Heart left ventricle (tissue), 16 donors: ENCODE measurements at regions of chr1 and their contacts with region 1.

Region 1: DNA sequence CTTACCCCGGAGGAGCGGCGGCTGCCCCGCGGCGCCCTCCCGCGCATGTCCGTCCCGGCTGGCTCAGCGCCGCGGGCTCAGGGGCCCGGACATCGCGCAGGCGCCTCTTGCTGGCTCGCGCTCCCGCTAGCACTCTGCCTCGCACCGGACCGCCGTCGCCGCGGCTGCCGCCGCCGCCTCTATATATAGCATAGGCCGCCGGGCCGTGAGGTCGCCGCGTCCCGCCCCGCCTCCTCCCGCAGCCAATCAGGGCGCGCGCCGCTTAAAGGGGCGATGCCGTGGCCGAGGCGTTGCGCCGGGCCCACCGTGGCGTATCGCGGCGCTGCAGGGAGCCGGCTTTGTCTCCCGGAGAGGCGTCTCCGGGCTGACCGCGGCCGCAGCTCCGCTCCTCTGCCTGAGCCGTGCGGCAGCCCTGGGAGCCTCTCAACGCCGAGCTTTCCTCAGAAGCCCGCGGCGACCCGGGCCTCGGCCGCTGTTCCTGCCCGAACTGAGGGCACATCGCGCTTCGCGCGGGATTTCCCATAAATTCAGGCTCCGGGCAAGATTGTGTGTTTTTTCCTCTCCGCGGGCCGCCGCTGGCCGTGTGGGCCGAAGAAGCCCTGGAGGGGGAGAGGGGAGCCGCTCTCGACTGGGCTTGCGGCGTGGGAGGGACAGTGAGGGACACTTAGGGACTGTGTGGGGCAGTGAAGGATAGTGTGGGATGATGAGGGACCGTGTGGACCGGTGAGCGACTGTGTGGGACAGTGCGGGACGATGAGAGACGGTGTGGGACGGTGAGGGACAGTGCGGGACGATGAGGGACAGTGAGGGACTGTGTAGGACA is at the start of gene ERRFI1:
- DNase-seq: peak; percentile 94 to 98 (median 96)
- ATAC-seq: peak; percentile 94 to 98 (median 96)
- H3K4me3 ChIP-seq: peak within 1 kb of the TSS; percentile 66 to 95 (median 86)
- H3K27ac ChIP-seq: peak within 1 kb of the TSS; percentile 61 to 96 (median 88)
- H3K4me1 ChIP-seq: peaks cover 0 to 49% (median 29%) of the 10 kb centered on the region in 12 donors
- H3K27me3 ChIP-seq: peaks cover 0 to 17% (median 0%) of the 10 kb centered on the region in 9 donors
- CTCF ChIP-seq: peak in 3 of 12 donors; percentile 8 to 21 (median 11)
- POLR2A ChIP-seq: peak; percentile 94 to 99
- total RNA-seq, gene ERRFI1: 6.2 to 16.1 (median 12.0) TPM

Region 2: DNA sequence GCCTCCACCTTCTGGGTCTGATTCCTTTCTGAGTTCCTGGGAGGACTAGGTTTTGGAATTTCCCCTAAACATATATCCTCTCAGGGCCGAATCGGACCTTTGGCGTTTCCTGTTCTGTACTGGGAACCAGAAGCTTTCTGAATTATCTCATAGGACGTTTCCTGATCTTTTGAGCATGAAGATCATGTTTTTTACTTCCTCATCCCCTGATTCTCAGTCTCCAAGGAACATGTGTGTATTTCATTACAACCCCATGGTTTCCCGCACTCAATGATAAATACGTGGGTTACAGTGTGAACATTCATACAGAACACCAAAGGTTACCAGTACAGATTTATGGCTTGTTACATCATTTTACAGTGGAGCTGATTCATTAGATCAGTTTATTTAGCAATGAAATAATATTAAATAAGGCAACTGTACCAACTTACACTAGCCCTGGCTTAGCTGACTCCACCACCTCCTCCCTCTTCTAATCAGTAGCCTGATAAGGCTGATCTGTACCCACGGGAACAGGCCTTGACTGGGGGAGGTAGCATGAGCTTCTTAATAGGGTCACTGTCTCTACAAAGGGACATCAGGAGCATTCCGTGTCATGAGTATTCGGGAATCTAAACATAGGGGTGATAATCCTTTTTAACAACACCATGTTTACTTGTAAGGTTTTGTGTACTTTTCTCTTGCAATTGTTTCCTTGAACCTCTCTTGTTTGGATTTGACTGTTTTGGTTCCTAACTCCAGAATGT is 57.5 kb after region 1 on chr1:
- intact Hi-C with region 1: loop called in 1 of 10 experiments (anchors 10 kb)
- DNase-seq: no peak
- ATAC-seq: peak; percentile 33 to 79 (median 45)
- H3K4me3 ChIP-seq: no peak overlapping the region
- H3K27ac ChIP-seq: peak overlapping the region in 10 of 12 donors; percentile 26 to 77 (median 70)
- H3K4me1 ChIP-seq: peaks cover 0 to 36% (median 18%) of the 10 kb centered on the region in 12 donors
- H3K27me3 ChIP-seq: no peaks in the 10 kb centered on the region
- CTCF ChIP-seq: no peak
- POLR2A ChIP-seq: no peak

Region 3: GRCh38 chr1:8202182-8202905 is 176.0 kb after region 1 on chr1:
- intact Hi-C with region 1: loop called in 1 of 10 experiments (anchors 10 kb)
- DNase-seq: peak; percentile 37 to 70 (median 56)
- ATAC-seq: peak; percentile 80 to 90 (median 84)
- H3K4me3 ChIP-seq: peak overlapping the region in 7 of 12 donors; percentile 4 to 45 (median 35)
- H3K27ac ChIP-seq: peak overlapping the region in 11 of 12 donors; percentile 13 to 89 (median 69)
- H3K4me1 ChIP-seq: peaks cover 0 to 39% (median 7%) of the 10 kb centered on the region in 12 donors
- H3K27me3 ChIP-seq: no peaks in the 10 kb centered on the region
- CTCF ChIP-seq: no peak
- POLR2A ChIP-seq: no peak

Region 4: DNA sequence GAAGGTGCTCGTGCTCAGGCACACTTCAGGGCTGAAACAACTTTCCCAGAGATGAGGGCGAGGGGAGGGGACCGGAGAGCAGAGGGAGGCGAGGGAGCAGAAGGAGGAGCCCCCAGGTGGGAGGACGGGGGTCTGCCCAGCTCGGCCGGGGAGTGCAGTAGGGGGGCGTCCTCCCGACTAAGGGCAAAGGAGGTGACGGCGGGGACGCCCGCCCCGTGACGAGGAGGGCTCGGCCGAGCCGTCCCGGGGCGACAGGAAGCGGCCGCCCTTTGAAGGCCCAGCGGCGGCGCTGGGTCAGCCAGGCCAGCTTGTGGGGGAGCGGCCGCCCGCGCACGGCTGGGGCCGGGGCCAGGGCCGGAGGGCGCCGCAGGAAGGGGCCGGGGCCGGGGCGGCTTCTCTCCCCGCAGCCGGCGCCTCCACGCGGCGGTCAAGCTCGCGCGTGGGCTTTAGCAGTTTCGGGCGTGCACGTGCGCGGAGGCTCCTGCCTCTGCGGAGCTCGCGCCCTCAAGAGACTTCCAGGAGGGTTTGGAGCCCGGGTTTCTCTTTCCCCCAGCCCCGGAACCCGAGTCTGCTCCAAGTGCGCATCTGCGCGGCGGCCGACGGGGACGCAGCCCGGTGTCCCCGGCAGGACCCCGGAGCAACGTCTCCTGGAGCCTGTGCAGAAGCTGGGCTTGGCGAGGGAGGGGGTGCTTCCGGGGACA is 190.8 kb after region 1 on chr1:
- intact Hi-C with region 1: loop called in 5 of 10 experiments (anchors 5 to 10 kb)
- DNase-seq: peak; percentile 47 to 78 (median 53)
- ATAC-seq: peak; percentile 33 to 87 (median 84)
- H3K4me3 ChIP-seq: peak overlapping the region; percentile 19 to 70 (median 56)
- H3K27ac ChIP-seq: peak overlapping the region; percentile 29 to 83 (median 62)
- H3K4me1 ChIP-seq: peaks cover 0 to 64% (median 15%) of the 10 kb centered on the region in 12 donors
- H3K27me3 ChIP-seq: peaks cover 0 to 6% (median 0%) of the 10 kb centered on the region in 9 donors
- CTCF ChIP-seq: peak in 4 of 12 donors; percentile 11 to 34 (median 28)
- POLR2A ChIP-seq: no peak

Region 5: GRCh38 chr1:8238851-8239305 is 212.5 kb after region 1 on chr1:
- intact Hi-C with region 1: loop called in 2 of 10 experiments (anchors 5 kb)
- DNase-seq: no peak
- ATAC-seq: peak in 3 of 4 donors; percentile 52 to 68 (median 65)
- H3K4me3 ChIP-seq: no peak overlapping the region
- H3K27ac ChIP-seq: peak overlapping the region in 1 of 12 donors; percentile 34
- H3K4me1 ChIP-seq: peaks cover 0 to 11% (median 0%) of the 10 kb centered on the region in 12 donors
- H3K27me3 ChIP-seq: peaks cover 0 to 9% (median 0%) of the 10 kb centered on the region in 9 donors
- CTCF ChIP-seq: peak in 11 of 12 donors; percentile 13 to 49 (median 28)
- POLR2A ChIP-seq: no peak

Region 6: DNA sequence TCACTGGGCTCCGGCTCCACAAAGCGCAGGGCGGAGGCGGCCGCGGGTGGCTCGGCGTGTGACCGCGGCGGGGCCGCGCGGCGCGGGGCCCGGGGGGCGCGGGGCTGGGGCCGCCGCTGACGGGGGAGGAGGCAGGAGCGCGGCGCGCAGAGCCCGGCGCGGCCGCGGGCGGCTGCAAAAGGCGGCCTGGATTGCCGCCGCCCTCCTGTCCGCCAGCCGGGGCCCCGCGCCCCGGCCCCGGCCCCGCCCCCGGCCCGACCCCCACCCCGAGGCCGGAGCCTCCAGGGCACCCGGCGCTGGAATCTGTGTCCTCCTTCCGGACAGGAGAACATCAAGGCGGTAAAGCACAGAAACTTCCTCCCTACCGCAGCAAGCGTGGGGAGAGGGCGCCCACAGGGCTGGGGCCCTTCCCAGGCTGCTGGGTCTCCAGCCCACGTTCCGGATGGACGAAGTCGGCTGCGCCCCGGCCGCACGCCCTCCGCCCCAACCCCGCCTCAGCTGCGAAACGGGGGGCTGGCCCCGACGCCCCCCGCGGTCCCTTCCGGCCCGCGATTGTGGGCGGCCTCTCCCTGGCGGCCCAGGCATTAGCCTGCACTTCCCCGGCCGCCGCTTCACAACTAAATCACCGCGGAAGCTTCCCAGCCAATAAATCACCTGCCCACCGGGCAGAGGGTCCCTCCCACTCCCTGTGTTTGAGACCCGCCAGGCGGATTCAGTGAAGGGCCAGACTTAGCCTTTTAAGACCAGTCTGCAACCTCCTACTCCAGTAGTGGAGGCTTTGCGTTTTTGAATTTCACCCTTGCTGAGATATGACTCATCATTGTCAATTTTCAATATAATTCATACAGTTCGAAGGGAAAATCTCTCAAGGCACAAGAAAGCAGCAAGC is 397.5 kb after region 1 on chr1:
- intact Hi-C with region 1: loop called in 1 of 10 experiments (anchors 10 kb)
- DNase-seq: peak; percentile 54 to 74 (median 64)
- ATAC-seq: peak; percentile 34 to 54 (median 49)
- H3K4me3 ChIP-seq: peak overlapping the region; percentile 64 to 98 (median 87)
- H3K27ac ChIP-seq: peak overlapping the region; percentile 93 to 100 (median 98)
- H3K4me1 ChIP-seq: peaks cover 0 to 83% (median 56%) of the 10 kb centered on the region in 12 donors
- H3K27me3 ChIP-seq: no peaks in the 10 kb centered on the region
- CTCF ChIP-seq: peak in 5 of 12 donors; percentile 10 to 27 (median 22)
- POLR2A ChIP-seq: peak in 1 of 2 donors; percentile 69